ENCODE measurements at regions of chr15 and their contacts with region 1.

Region 1: GRCh38 chr15:38536201-38536676 is 28.4 kb downstream of the RASGRP1 start:
- DNase-seq: no peak
- ATAC-seq: no peak
- H3K4me3 ChIP-seq: no peak overlapping the region
- H3K27ac ChIP-seq: no peak overlapping the region
- H3K4me1 ChIP-seq: no peaks in the 10 kb centered on the region
- H3K27me3 ChIP-seq: no peaks in the 10 kb centered on the region
- CTCF ChIP-seq: no peak
- EP300 ChIP-seq: no peak
- POLR2A ChIP-seq: no peak
- RAD21 ChIP-seq: no peak

Region 2: DNA sequence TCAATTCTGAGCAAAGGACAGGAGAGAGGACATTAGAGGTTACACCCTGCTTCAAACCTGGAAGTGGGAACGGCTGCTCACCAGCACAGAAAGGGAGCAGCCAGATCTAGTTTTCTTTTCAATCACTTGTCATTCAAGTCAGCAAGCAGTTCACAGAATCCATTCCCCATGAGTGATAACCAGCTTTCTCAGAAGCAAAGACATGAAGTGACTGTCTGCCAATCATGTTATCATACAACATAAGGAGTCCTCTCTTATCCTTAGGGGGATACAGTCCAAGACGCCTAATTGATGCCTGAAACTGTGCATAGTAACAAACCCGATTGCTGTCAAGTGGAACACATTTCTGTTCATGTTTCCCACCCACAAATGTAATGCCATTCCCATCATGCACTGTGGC is 27.6 kb before region 1 on chr15:
- CTCF ChIA-PET with region 1: interaction called, 3 read pairs
- POLR2A ChIA-PET with region 1: no interaction called
- RAD21 ChIA-PET with region 1: no interaction called
- SMC1A ChIA-PET with region 1: interaction called, 8 read pairs
- in situ Hi-C with region 1: no loop called
- intact Hi-C with region 1: loop called (anchors 5 kb)
- DNase-seq: peak; percentile 47
- ATAC-seq: peak; percentile 68
- H3K4me3 ChIP-seq: no peak overlapping the region
- H3K27ac ChIP-seq: peak overlapping the region; percentile 50
- H3K4me1 ChIP-seq: peaks cover 11% of the 10 kb centered on the region
- H3K27me3 ChIP-seq: no peaks in the 10 kb centered on the region
- CTCF ChIP-seq: no peak
- EP300 ChIP-seq: no peak
- POLR2A ChIP-seq: no peak
- RAD21 ChIP-seq: no peak

Region 3: DNA sequence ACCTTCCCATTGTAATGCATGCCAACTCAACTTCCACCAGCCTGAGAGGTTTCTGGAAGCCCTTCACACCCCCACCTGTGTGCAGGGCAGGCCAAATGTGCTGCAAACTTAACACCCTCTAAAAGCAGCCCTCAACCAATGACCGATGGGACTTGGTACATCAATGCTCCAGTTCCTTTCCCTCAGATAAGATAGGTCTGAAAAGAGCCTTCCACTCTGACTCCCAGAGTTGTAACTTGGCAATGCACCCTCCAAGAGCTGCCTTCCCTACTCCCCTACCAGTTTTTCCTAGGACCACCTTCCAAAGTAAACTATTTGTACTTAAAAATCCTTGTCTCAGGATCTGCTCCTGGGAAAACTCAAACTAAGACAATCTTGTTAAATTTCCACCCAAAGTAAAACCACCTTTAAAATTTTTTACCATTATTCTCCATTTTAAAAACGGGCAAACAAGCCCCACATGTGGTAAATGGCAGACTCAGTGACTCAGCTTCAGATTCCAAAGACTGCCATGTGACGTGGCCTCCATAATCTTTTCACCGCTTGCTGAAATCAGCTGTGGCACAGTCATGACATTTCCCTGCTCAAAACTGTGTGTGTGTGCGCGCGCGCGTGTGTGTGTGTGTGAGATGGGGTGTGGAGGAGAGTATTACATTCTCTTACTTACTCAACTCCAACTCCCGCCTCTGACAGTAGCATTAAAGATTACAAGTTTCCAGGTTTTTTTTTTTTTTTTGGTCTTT is 11.2 kb after region 1 on chr15:
- CTCF ChIA-PET with region 1: interaction called, 10 read pairs
- POLR2A ChIA-PET with region 1: interaction called, 10 read pairs
- RAD21 ChIA-PET with region 1: no interaction called
- SMC1A ChIA-PET with region 1: interaction called, 10 read pairs
- in situ Hi-C with region 1: no loop called
- intact Hi-C with region 1: no loop called
- DNase-seq: no peak
- ATAC-seq: no peak
- H3K4me3 ChIP-seq: no peak overlapping the region
- H3K27ac ChIP-seq: no peak overlapping the region
- H3K4me1 ChIP-seq: no peaks in the 10 kb centered on the region
- H3K27me3 ChIP-seq: no peaks in the 10 kb centered on the region
- CTCF ChIP-seq: no peak
- EP300 ChIP-seq: no peak
- POLR2A ChIP-seq: no peak
- RAD21 ChIP-seq: no peak

Region 4: GRCh38 chr15:38554354-38554753 is 18.1 kb after region 1 on chr15:
- CTCF ChIA-PET with region 1: interaction called, 10 read pairs
- POLR2A ChIA-PET with region 1: interaction called, 10 read pairs
- RAD21 ChIA-PET with region 1: interaction called, 3 read pairs
- SMC1A ChIA-PET with region 1: interaction called, 10 read pairs
- in situ Hi-C with region 1: no loop called
- intact Hi-C with region 1: no loop called
- DNase-seq: no peak
- ATAC-seq: peak; percentile 80
- H3K4me3 ChIP-seq: no peak overlapping the region
- H3K27ac ChIP-seq: peak overlapping the region; percentile 59; the same call in 1 of the 2 replicates
- H3K4me1 ChIP-seq: peaks cover 45% of the 10 kb centered on the region
- H3K27me3 ChIP-seq: no peaks in the 10 kb centered on the region
- CTCF ChIP-seq: no peak
- EP300 ChIP-seq: no peak
- POLR2A ChIP-seq: no peak
- RAD21 ChIP-seq: no peak